Common myeloid progenitor, CD34-positive (primary cell): ENCODE measurements at regions of chr14 and their contacts with region 1.

Region 1: GRCh38 chr14:22448905-22449599 is 140.0 kb downstream of the DAD1 start:
- DNase-seq: no peak
- H3K4me3 ChIP-seq: no peak overlapping the region
- H3K27ac ChIP-seq: peak overlapping the region in 1 of 2 experiments; percentile 67
- H3K4me1 ChIP-seq: peaks cover 15 to 43% (median 30%) of the 10 kb centered on the region in 4 experiments
- H3K27me3 ChIP-seq: no peaks in the 10 kb centered on the region

Region 2: DNA sequence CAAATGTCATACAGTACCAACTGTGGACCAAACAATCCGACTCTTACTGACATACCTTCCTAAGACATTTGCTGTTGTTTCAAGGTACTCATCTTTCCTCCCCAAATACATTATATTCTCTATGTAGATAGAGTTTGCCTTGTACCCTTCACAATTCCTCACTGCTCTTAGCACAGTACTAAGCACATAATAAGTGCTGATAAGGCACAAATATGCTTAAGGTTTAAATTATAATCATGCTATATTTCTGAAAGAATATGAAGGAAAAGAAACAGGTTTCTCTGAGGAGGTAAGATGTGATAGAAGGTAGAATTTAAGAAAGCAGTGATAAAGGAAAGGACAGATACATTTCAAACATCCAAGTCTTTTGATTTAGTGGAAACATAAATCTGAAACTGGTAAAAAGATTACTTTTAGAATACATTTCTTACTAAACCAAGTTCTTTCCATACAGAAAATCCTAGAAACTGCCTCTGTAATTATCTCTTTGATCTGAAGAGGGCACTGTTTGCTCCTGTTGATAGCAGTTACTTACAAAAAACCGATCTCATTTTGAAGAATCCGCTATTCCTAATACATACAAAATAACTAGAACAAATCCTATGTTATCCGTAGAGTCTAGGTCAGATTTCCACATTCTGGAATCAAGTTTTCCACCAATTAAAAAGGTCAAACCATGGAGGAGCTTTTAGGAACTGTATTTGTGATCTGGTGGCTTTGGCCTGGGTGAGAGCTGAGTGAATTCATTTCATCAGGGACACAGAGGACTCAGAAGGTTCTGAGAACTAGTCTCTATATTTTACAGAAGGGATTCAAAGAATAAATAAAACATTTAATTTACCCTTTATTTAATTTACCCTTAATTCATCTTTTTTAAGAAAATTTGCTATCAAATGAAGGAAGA is 171.9 kb before region 1 on chr14:
- CTCF ChIA-PET with region 1: no interaction called
- POLR2A ChIA-PET with region 1: no interaction called
- DNase-seq: peak; percentile 29 to 49 (median 37)
- H3K4me3 ChIP-seq: no peak overlapping the region
- H3K27ac ChIP-seq: no peak overlapping the region
- H3K4me1 ChIP-seq: peaks cover 0 to 16% (median 12%) of the 10 kb centered on the region in 4 experiments
- H3K27me3 ChIP-seq: no peaks in the 10 kb centered on the region

Region 3: DNA sequence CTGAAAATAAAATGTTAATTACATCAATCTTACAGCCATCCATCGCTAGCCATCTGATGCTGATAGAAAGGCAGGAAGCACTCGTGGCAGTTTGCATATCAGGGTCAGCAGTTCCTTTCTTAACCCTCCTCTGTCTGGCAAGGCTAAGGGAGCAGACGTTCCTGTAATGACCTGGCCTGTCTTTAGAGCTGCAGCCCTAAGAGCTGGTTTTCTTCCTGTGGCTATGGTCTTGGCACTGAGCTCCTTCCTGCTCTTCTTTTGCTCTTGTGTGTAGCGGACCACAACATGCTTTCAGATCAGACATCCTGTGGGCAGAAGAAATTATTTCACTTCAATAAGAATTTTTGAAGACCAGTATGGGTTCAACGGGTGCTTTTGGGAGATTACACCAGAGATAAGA is 30.4 kb before region 1 on chr14:
- CTCF ChIA-PET with region 1: interaction called, 12 read pairs
- POLR2A ChIA-PET with region 1: no interaction called
- DNase-seq: peak; percentile 19 to 82 (median 57)
- H3K4me3 ChIP-seq: peak overlapping the region in 2 of 7 experiments; percentile 2 to 19
- H3K27ac ChIP-seq: peak overlapping the region in 1 of 2 experiments; percentile 7
- H3K4me1 ChIP-seq: peaks cover 19 to 69% (median 59%) of the 10 kb centered on the region in 4 experiments
- H3K27me3 ChIP-seq: no peaks in the 10 kb centered on the region

Region 4: GRCh38 chr14:22432348-22432976 is 16.6 kb before region 1 on chr14:
- CTCF ChIA-PET with region 1: interaction called, 40 read pairs
- POLR2A ChIA-PET with region 1: interaction called, 6 read pairs
- DNase-seq: peak; percentile 88 to 92 (median 91)
- H3K4me3 ChIP-seq: peak overlapping the region in 5 of 7 experiments; percentile 43 to 79 (median 61)
- H3K27ac ChIP-seq: peak overlapping the region in 1 of 2 experiments; percentile 62
- H3K4me1 ChIP-seq: peaks cover 40 to 93% (median 81%) of the 10 kb centered on the region in 4 experiments
- H3K27me3 ChIP-seq: no peaks in the 10 kb centered on the region

Region 5: DNA sequence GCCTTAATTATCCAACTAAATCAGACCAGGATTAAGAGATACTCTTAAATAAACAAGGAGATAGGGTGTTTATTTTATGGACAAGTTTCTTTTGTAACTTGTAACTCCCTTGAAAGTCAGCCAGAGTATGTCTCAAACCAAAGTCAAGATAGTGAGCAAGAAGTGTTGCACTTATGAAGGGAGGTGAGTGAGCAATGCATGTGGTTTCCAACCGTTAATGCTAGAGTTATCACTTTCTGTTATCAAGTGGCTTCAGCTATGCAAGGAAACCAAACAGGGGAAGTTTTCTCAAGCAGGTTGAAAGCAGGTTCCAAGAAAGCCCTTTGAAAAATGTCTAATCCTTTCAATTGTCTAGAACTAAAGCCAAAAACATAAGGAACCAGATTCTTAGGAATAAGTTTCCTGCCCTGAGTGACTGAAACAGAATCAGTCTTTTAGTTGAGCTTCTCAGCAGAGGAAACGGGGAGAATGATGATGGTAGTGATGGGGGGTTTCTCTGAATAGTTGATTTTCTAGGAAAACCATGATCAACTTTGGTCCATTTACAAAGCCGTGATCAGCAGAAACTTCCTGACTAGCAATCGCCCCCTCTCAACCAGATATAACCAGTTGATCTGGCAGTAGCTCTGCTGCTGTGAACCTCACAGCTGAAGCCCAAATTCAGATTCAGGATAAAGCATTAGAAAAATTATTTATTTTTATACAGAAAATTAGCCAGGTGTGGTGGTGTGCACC is 11.6 kb after region 1 on chr14:
- CTCF ChIA-PET with region 1: interaction called, 62 read pairs
- POLR2A ChIA-PET with region 1: interaction called, 6 read pairs
- DNase-seq: peak; percentile 74 to 97 (median 93)
- H3K4me3 ChIP-seq: peak overlapping the region in 3 of 7 experiments; percentile 27 to 56 (median 30)
- H3K27ac ChIP-seq: peak overlapping the region; percentile 34 to 75
- H3K4me1 ChIP-seq: peaks cover 22 to 78% (median 59%) of the 10 kb centered on the region in 4 experiments
- H3K27me3 ChIP-seq: no peaks in the 10 kb centered on the region